ENCODE measurements at regions of chr6 and their contacts with region 1.

Region 1: DNA sequence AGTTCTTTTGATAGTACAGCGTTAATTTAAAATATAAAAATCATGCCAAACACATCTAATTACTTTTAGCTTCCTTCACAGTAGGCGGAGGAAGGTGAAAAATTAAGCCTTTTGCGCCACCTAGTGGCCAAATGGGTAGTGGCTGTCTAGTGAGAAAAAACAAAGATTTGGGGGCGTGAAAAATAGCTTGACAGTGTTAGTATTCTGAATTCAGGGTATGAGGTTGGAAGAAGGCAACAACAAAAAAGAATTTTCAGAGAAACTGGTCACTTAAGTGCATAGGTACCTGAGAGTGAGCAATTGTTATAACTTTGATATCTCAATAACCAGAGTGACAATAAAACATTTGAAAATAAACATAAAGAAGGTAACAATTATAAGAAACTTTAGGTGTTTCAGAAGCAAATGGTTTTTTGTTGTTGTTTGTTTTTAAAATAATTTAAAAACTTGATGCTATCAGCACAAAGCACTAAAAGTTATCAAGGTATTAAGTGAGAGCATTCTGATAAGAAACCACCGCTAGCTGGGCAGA is 14.3 kb downstream of the PSMB9 start:
- DNase-seq: peak; percentile 72 to 93 (median 89)
- ATAC-seq: peak; percentile 80
- H3K4me3 ChIP-seq: no peak overlapping the region
- H3K4me3 Mint-ChIP-seq: no peak overlapping the region
- H3K27ac ChIP-seq: no peak overlapping the region
- H3K27ac Mint-ChIP-seq: no peak overlapping the region
- H3K4me1 ChIP-seq: peaks cover 29% of the 10 kb centered on the region
- H3K4me1 Mint-ChIP-seq: peaks cover 28% of the 10 kb centered on the region
- H3K27me3 ChIP-seq: no peaks in the 10 kb centered on the region
- H3K27me3 Mint-ChIP-seq: no peaks in the 10 kb centered on the region
- CTCF ChIP-seq: peak; percentile 96

Region 2: GRCh38 chr6:32244946-32245398 is 623.4 kb before region 1 on chr6:
- CTCF ChIA-PET with region 1: no interaction called
- POLR2A ChIA-PET with region 1: no interaction called
- intact Hi-C with region 1: loop called in 1 of 2 experiments (anchors 5 kb)
- DNase-seq: peak; percentile 38 to 83 (median 75)
- ATAC-seq: peak; percentile 69
- H3K4me3 ChIP-seq: peak overlapping the region in 1 of 2 experiments; percentile 18
- H3K4me3 Mint-ChIP-seq: peak overlapping the region; percentile 44
- H3K27ac ChIP-seq: no peak overlapping the region
- H3K27ac Mint-ChIP-seq: no peak overlapping the region
- H3K4me1 ChIP-seq: peaks cover 5% of the 10 kb centered on the region
- H3K4me1 Mint-ChIP-seq: peaks cover 5% of the 10 kb centered on the region
- H3K27me3 ChIP-seq: no peaks in the 10 kb centered on the region
- H3K27me3 Mint-ChIP-seq: peaks cover 2% of the 10 kb centered on the region
- CTCF ChIP-seq: peak; percentile 94

Region 3: DNA sequence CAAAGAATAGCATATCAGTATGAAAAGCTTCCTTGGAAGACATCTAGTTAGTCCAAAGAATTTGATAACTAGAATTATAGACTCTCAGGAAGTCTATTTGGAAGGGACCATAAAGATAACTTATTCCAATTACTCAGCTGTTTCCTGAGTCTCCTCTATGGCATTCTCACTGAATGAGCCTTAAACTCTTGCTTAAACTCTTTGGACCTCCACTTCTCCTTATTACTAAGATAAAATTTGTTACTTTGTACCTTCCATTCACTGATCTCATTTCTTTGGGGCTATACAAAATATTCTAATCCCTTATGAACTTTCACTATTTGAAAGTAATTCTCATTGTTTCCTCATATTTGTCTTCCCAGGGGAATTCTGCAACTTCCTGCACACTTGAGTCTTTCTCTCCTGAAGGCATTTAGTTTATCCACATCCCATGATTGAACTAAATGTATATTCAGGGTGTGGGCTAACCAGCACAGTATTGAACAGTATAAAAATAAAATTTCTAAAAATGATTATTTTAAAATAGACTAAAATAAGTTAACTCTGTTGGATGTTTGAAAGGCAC is 577.4 kb before region 1 on chr6:
- CTCF ChIA-PET with region 1: no interaction called
- POLR2A ChIA-PET with region 1: no interaction called
- intact Hi-C with region 1: no loop called
- DNase-seq: no peak
- ATAC-seq: no peak
- H3K4me3 ChIP-seq: no peak overlapping the region
- H3K4me3 Mint-ChIP-seq: no peak overlapping the region
- H3K27ac ChIP-seq: no peak overlapping the region
- H3K27ac Mint-ChIP-seq: no peak overlapping the region
- H3K4me1 ChIP-seq: no peaks in the 10 kb centered on the region
- H3K4me1 Mint-ChIP-seq: no peaks in the 10 kb centered on the region
- H3K27me3 ChIP-seq: no peaks in the 10 kb centered on the region
- H3K27me3 Mint-ChIP-seq: peaks cover 26% of the 10 kb centered on the region
- CTCF ChIP-seq: no peak

Region 4: DNA sequence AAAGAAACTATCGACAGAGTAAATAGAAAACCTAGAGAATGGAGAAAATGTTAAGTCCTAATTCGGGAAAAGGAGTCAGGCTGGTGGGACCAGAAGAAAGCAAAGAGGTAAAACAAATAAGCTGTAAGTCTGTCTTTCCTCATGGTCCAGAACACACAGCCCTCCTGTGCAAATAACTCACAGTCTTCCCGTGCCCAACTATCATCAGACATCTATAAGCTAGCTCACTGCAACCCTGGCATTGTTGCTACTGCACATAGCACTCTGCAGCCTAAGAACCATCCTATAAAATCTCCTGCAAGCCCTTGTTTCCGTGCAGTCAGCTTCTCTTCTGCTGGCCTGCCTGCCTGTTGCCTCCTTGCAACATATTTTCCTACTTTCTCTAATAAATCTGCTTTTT is 411.3 kb before region 1 on chr6:
- CTCF ChIA-PET with region 1: no interaction called
- POLR2A ChIA-PET with region 1: no interaction called
- intact Hi-C with region 1: no loop called
- DNase-seq: no peak
- ATAC-seq: no peak
- H3K4me3 ChIP-seq: no peak overlapping the region
- H3K4me3 Mint-ChIP-seq: no peak overlapping the region
- H3K27ac ChIP-seq: no peak overlapping the region
- H3K27ac Mint-ChIP-seq: no peak overlapping the region
- H3K4me1 ChIP-seq: peaks cover 4% of the 10 kb centered on the region
- H3K4me1 Mint-ChIP-seq: peaks cover 4% of the 10 kb centered on the region
- H3K27me3 ChIP-seq: peaks cover 0 to 10% of the 10 kb centered on the region in 2 experiments
- H3K27me3 Mint-ChIP-seq: peaks cover 65% of the 10 kb centered on the region
- CTCF ChIP-seq: no peak

Region 5: DNA sequence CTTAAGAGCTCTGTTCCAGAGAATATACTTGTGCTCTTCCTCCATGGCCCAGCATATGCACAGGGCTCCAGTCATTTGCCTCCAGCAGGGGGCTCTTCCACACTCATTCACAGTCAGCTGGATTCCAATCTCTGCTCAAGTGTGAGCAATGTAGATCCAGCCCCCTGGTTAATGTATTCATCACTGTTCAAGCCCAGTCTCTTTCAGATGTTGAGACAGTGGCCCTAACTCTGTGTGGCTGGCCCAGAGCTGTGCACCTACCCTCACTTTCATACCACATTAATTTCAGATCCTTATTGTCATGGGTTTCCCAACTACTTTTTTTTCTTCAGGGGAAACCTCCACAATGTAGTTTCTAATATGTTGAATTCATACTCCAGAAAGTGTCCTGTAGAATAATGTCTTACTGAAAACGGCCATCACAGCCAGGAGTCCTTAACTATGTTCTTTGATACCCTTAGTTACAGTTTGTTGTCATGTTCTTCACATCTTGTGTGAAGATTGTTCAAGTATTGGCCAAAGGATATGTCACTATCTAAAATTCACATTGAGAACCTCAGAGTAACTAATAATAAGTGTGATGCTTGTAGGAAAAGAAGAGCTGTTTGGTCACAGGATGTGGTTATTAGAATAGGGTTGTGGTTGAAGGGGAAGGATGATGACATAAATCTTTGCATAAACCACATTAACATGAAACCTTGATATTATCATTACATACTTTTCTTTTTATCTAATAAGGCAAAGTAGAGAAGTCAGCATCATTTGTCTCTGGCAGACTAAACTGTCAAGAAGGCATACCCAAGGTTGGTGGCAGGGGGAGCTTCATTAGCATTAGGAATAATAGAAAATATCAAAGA is 245.6 kb before region 1 on chr6:
- CTCF ChIA-PET with region 1: interaction called, 6 read pairs
- POLR2A ChIA-PET with region 1: no interaction called
- intact Hi-C with region 1: loop called in 1 of 2 experiments (anchors 5 kb)
- DNase-seq: peak; percentile 6 to 94 (median 44)
- ATAC-seq: peak; percentile 82
- H3K4me3 ChIP-seq: no peak overlapping the region
- H3K4me3 Mint-ChIP-seq: peak overlapping the region; percentile 6
- H3K27ac ChIP-seq: peak overlapping the region; percentile 60 to 89
- H3K27ac Mint-ChIP-seq: peak overlapping the region; percentile 85
- H3K4me1 ChIP-seq: peaks cover 38% of the 10 kb centered on the region
- H3K4me1 Mint-ChIP-seq: peaks cover 33% of the 10 kb centered on the region
- H3K27me3 ChIP-seq: no peaks in the 10 kb centered on the region
- H3K27me3 Mint-ChIP-seq: no peaks in the 10 kb centered on the region
- CTCF ChIP-seq: peak; percentile 47

Region 6: DNA sequence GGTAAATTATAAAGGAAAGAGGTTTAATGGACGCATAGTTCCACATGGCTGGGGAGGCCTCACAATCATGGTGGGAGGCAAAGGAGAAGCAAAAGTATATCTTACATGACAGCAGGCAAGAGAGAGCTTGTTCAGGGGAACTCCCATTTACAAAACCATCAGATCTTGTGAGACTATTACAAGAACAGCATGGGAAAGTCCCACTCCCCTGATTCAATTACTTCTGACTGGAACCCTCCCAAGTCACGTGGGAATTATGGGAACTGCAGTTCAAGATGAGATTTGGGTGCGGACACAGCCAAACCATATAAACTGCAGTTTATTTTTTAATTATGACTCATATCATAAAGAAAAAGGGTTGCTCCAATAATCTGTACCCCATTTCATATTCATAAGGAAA is 149.4 kb before region 1 on chr6:
- CTCF ChIA-PET with region 1: no interaction called
- POLR2A ChIA-PET with region 1: no interaction called
- intact Hi-C with region 1: no loop called
- DNase-seq: peak in 1 of 9 experiments; percentile 12
- ATAC-seq: no peak
- H3K4me3 ChIP-seq: no peak overlapping the region
- H3K4me3 Mint-ChIP-seq: no peak overlapping the region
- H3K27ac ChIP-seq: no peak overlapping the region
- H3K27ac Mint-ChIP-seq: no peak overlapping the region
- H3K4me1 ChIP-seq: no peaks in the 10 kb centered on the region
- H3K4me1 Mint-ChIP-seq: no peaks in the 10 kb centered on the region
- H3K27me3 ChIP-seq: no peaks in the 10 kb centered on the region
- H3K27me3 Mint-ChIP-seq: peaks cover 28% of the 10 kb centered on the region
- CTCF ChIP-seq: no peak

Region 7: GRCh38 chr6:32825966-32826365 is 42.4 kb before region 1 on chr6:
- CTCF ChIA-PET with region 1: interaction called, 35 read pairs
- POLR2A ChIA-PET with region 1: interaction called, 5 read pairs
- intact Hi-C with region 1: loop called in 1 of 2 experiments (anchors 1 kb)
- DNase-seq: peak in 1 of 9 experiments; percentile 39
- ATAC-seq: no peak
- H3K4me3 ChIP-seq: no peak overlapping the region
- H3K4me3 Mint-ChIP-seq: no peak overlapping the region
- H3K27ac ChIP-seq: no peak overlapping the region
- H3K27ac Mint-ChIP-seq: no peak overlapping the region
- H3K4me1 ChIP-seq: no peaks in the 10 kb centered on the region
- H3K4me1 Mint-ChIP-seq: peaks cover 2% of the 10 kb centered on the region
- H3K27me3 ChIP-seq: no peaks in the 10 kb centered on the region
- H3K27me3 Mint-ChIP-seq: no peaks in the 10 kb centered on the region
- CTCF ChIP-seq: no peak

Region 8: DNA sequence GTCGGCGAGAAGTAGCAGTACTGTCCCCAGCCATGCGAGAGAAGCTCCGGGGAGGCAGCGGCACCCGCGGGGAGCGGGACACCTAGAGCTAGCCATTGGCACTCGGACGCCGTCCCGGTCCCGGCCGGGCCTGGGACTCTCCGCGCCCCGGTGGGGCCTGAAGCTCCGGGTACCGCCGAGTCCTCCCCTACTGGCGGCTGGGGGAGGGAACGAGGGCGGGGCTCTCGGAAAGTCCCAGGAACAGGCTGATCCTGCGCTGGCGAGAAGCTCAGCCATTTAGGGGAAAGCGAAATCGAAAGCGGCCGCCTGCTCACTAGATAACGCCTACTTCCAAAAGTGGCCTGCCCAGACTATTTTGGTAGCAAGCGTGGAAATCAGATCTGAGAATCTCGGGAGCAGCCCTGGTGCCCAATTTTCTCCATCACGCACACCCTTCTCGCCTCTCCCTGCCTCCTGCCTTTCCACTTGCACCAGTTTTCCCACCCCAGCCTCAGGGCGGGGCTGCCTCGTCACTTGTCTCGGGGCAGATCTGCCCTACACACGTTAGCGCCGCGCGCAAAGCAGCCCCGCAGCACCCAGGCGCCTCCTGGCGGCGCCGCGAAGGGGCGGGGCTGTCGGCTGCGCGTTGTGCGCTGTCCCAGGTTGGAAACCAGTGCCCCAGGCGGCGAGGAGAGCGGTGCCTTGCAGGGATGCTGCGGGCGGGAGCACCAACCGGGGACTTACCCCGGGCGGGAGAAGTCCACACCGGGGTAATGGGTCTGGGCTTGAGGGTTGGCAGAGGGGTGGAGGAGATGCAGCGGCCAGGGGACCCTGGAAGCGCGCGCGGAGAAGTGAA is 14.6 kb before region 1 on chr6 and contains the starts of genes PSMB9 and TAP1:
- CTCF ChIA-PET with region 1: interaction called, 147 read pairs
- POLR2A ChIA-PET with region 1: interaction called, 55 read pairs
- intact Hi-C with region 1: loop called (anchors 1 kb)
- DNase-seq: peak; percentile 83 to 99 (median 94)
- ATAC-seq: peak; percentile 78
- H3K4me3 ChIP-seq: peak within 1 kb of the TSS; percentile 85 to 99
- H3K4me3 Mint-ChIP-seq: peak within 1 kb of the TSS; percentile 99
- H3K27ac ChIP-seq: peak within 1 kb of the TSS; percentile 98
- H3K27ac Mint-ChIP-seq: peak within 1 kb of the TSS; percentile 100
- H3K4me1 ChIP-seq: peaks cover 62% of the 10 kb centered on the region
- H3K4me1 Mint-ChIP-seq: peaks cover 69% of the 10 kb centered on the region
- H3K27me3 ChIP-seq: no peaks in the 10 kb centered on the region
- H3K27me3 Mint-ChIP-seq: no peaks in the 10 kb centered on the region
- CTCF ChIP-seq: peak; percentile 89
- total RNA-seq, gene PSMB9: 32.9 to 34.7 TPM
- total RNA-seq, gene TAP1: 98.0 to 98.1 TPM

Region 9: DNA sequence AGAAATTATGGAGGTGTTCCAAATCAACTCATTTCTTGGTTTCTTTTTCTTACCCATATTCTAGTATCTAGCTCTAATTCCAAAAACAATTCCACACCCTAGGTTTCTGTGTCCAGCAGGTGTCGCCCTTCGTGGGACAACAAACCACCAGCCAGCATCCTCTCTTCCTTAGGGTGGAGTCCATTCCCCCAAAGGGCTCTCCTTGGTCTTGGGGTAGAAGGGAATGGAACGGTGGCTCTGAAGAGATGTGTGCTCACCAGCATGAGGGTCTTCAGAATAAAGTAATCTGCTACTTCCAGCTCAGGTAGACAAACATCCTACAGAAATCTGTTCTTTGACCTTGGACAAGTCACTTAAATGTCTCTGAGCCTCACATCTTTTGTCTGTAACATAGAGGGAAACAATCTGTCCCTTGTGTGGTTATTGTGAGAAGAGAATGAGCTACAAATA is 65.3 kb after region 1 on chr6:
- CTCF ChIA-PET with region 1: interaction called, 12 read pairs
- POLR2A ChIA-PET with region 1: interaction called, 3 read pairs
- intact Hi-C with region 1: no loop called
- DNase-seq: peak; percentile 50 to 87 (median 81)
- ATAC-seq: peak; percentile 61
- H3K4me3 ChIP-seq: no peak overlapping the region
- H3K4me3 Mint-ChIP-seq: no peak overlapping the region
- H3K27ac ChIP-seq: no peak overlapping the region
- H3K27ac Mint-ChIP-seq: no peak overlapping the region
- H3K4me1 ChIP-seq: no peaks in the 10 kb centered on the region
- H3K4me1 Mint-ChIP-seq: peaks cover 5% of the 10 kb centered on the region
- H3K27me3 ChIP-seq: no peaks in the 10 kb centered on the region
- H3K27me3 Mint-ChIP-seq: no peaks in the 10 kb centered on the region
- CTCF ChIP-seq: peak; percentile 72

Region 10: DNA sequence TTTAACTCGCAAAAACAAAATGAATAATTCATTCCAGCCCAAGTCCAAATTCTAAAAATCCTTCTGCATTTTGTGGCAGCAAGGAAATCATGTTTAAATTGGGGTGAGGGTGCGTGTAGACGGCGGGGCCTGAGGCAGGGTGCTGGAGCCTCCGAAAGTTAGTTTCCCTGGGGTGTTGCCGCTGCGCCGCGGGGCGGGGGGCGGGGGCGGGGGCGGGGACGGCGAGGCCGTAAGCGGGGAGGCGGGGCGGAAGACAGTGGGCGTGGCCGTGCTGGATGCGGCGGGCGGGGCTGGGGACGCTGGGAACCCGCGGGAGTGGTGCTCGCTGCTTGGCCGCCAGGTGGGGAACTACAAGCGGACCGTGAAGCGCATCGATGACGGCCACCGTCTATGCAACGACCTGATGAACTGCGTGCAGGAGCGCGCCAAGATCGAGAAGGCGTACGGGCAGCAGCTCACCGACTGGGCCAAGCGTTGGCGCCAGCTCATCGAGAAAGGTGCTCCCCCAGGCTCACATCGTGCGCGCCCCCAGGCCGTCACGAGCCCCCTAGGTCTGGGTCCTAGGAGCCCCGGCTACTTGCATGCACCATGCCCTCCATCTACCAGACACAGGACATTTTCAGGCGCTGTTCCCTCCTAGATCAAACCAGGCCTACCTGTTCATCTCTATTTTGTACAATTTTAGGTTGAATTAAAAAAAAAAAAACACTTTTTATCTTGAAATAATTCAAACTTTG is 1658.8 kb after region 1 on chr6:
- CTCF ChIA-PET with region 1: no interaction called
- POLR2A ChIA-PET with region 1: no interaction called
- intact Hi-C with region 1: no loop called
- DNase-seq: peak; percentile 91 to 99 (median 96)
- ATAC-seq: peak; percentile 98
- H3K4me3 ChIP-seq: peak overlapping the region; percentile 17 to 31
- H3K4me3 Mint-ChIP-seq: peak overlapping the region; percentile 58
- H3K27ac ChIP-seq: peak overlapping the region; percentile 31 to 58
- H3K27ac Mint-ChIP-seq: peak overlapping the region; percentile 80
- H3K4me1 ChIP-seq: peaks cover 7% of the 10 kb centered on the region
- H3K4me1 Mint-ChIP-seq: peaks cover 14% of the 10 kb centered on the region
- H3K27me3 ChIP-seq: no peaks in the 10 kb centered on the region
- H3K27me3 Mint-ChIP-seq: no peaks in the 10 kb centered on the region
- CTCF ChIP-seq: peak; percentile 51

Measured in CD8-positive, alpha-beta T cell (primary cell).